Activated T-helper 1 cell treated with anti-CD3 and anti-CD28 coated beads, Interleukin-12 subunit alpha, Interleukin-12 subunit beta, Interleukin-2, Interleukin-4 antibody, amounts not matched to agents 30 ng/mL and 10 ng/mL and 1 ng/mL, durations not matched to agents 14 hours and 24 hours and 36 hours (primary cell): ENCODE measurements at regions of chr1 and their contacts with region 1.

Region 1: DNA sequence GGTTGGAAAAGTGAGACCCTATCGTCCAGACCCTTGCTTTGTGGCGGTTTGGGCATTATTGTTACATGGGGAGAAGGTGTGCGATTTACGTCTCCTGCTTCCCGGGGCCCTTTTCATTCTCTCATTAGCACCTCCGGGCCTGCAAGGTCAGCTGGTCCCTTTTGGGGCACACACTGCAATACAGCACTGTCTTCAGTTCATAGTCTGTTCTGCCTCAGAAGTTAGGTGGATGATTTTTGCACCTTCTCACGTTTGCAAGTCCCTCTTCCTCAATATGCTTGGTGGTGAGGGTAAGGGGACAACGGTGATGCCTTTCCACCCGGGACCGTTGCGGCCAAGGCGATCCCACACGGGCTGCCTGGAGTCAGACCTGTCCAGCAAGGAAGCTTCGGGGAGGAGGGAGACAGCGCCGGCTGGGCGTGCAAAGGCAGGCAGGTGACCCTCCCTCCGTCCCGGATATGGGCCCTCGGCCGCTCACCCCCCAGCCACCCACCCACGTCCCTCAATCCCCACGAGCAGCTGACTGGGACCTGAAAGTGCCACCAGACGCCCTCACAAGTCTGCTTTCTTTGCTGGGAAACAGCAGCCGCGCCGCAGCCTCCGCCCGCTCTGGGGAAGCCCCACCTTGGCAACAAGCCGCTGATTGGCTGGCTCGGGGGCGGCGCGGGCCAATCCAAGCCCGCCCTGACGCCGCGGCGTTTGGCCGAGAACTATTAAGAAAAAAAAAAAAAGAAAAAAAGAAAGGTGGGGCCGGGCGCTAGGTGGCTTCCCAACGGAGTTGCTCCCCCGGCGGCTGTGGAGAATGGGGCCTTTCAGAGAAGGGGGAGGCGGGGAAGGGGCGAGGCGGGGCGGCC is 21.7 kb downstream of the BTG2 start:
- DNase-seq: peak; percentile 94
- H3K4me3 Mint-ChIP-seq: peak overlapping the region; percentile 79
- H3K27ac Mint-ChIP-seq: peak overlapping the region; percentile 97
- H3K4me1 Mint-ChIP-seq: peaks cover 65% of the 10 kb centered on the region
- H3K27me3 Mint-ChIP-seq: peaks cover 2% of the 10 kb centered on the region

Region 2: GRCh38 chr1:203006948-203007871 is 319.8 kb before region 1 on chr1 and contains the start of gene TMEM183A:
- intact Hi-C with region 1: loop called (anchors 5 kb)
- DNase-seq: peak; percentile 95
- H3K4me3 Mint-ChIP-seq: peak within 1 kb of the TSS; percentile 89
- H3K27ac Mint-ChIP-seq: peak within 1 kb of the TSS; percentile 96
- H3K4me1 Mint-ChIP-seq: peaks cover 34% of the 10 kb centered on the region
- H3K27me3 Mint-ChIP-seq: no peaks in the 10 kb centered on the region
- total RNA-seq, gene TMEM183A: 69.9 and 83.6 TPM in 2 replicates

Region 3: GRCh38 chr1:203273206-203273868 is 53.7 kb before region 1 on chr1:
- intact Hi-C with region 1: loop called (anchors 1 kb)
- DNase-seq: peak; percentile 85
- H3K4me3 Mint-ChIP-seq: peak overlapping the region; percentile 72
- H3K27ac Mint-ChIP-seq: peak overlapping the region; percentile 79
- H3K4me1 Mint-ChIP-seq: peaks cover 58% of the 10 kb centered on the region
- H3K27me3 Mint-ChIP-seq: no peaks in the 10 kb centered on the region

Region 4: GRCh38 chr1:203340112-203340804 is 13.2 kb after region 1 on chr1:
- intact Hi-C with region 1: loop called (anchors 1 kb)
- DNase-seq: peak; percentile 45
- H3K4me3 Mint-ChIP-seq: no peak overlapping the region
- H3K27ac Mint-ChIP-seq: no peak overlapping the region
- H3K4me1 Mint-ChIP-seq: peaks cover 35% of the 10 kb centered on the region
- H3K27me3 Mint-ChIP-seq: peaks cover 30% of the 10 kb centered on the region

Region 5: GRCh38 chr1:203359010-203359571 is 32.0 kb after region 1 on chr1:
- intact Hi-C with region 1: no loop called
- DNase-seq: no peak
- H3K4me3 Mint-ChIP-seq: no peak overlapping the region
- H3K27ac Mint-ChIP-seq: no peak overlapping the region
- H3K4me1 Mint-ChIP-seq: no peaks in the 10 kb centered on the region
- H3K27me3 Mint-ChIP-seq: peaks cover 24% of the 10 kb centered on the region

Region 6: GRCh38 chr1:203408486-203409427 is 81.7 kb after region 1 on chr1:
- intact Hi-C with region 1: no loop called
- DNase-seq: no peak
- H3K4me3 Mint-ChIP-seq: no peak overlapping the region
- H3K27ac Mint-ChIP-seq: no peak overlapping the region
- H3K4me1 Mint-ChIP-seq: no peaks in the 10 kb centered on the region
- H3K27me3 Mint-ChIP-seq: peaks cover 28% of the 10 kb centered on the region

Region 7: DNA sequence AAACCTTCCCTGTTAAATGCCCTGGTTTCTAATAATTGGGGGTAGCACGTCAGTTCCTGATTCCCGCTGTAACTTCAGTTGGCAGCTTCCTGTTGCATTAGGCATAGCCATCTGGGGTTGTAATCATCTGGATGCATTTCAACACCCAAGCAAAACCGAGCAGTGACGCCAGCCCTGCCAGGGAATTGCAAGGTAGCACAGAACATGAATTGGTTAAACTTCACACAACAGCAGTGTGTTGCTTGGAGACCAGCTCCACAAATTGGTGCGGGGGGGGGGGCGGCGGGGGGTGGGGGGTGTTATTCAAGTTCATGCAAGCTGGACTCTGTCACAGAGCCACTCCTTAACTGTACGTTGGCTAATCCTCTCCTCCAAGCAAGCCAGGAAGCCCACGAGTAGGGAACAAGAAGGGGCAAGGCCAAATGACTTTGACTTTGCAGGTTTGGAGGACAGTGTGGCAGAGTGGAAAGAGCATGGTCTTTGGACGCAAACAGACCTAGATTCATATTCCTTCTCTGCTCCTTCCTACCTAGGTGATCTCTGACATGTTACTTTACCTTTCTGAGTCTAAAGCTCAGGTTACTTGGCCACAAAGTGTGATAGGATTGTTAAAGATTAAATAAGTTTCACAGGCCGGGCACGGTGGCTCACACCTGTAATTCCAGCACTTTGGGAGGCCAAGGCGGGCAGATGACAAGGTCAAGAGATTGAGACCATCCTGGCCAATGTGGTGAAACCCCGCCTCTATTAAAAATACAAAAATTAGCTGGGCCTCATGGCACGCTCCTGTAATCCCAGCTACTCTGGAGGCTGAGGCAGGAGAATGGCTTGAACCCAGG is 442.7 kb after region 1 on chr1:
- intact Hi-C with region 1: loop called (anchors 10 kb)
- DNase-seq: no peak
- H3K4me3 Mint-ChIP-seq: no peak overlapping the region
- H3K27ac Mint-ChIP-seq: no peak overlapping the region
- H3K4me1 Mint-ChIP-seq: peaks cover 27% of the 10 kb centered on the region
- H3K27me3 Mint-ChIP-seq: no peaks in the 10 kb centered on the region

Region 8: GRCh38 chr1:204411451-204412204 is 1084.6 kb after region 1 on chr1 and contains the start of gene PPP1R15B:
- intact Hi-C with region 1: loop called (anchors 10 kb)
- DNase-seq: peak; percentile 98
- H3K4me3 Mint-ChIP-seq: peak within 1 kb of the TSS; percentile 99
- H3K27ac Mint-ChIP-seq: peak within 1 kb of the TSS; percentile 99
- H3K4me1 Mint-ChIP-seq: peaks cover 12% of the 10 kb centered on the region
- H3K27me3 Mint-ChIP-seq: no peaks in the 10 kb centered on the region
- total RNA-seq, gene PPP1R15B: 75.8 and 76.2 TPM in 2 replicates